Calu3 (cell line): ENCODE measurements at regions of chr5 and their contacts with region 1.

Region 1: DNA sequence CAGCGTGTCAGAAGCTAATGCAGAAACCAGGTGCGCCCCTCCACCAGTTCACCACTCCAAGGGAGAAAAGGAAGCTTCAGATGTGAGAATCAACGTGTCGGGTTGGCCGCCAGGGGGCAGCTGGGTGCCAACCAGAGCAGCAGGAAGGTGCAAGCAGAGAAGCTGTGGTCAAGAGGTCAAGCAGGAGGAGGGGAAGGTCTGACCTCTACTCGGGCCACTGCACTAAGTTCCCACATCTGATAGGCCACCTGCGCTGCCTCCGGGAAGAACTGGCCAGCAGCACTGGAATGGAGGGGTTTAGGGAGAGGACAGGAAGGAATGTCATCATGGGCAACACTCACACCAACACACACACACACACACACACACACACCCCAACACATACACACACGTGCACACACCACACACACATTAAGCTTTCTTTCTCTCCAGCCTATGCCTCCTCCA is 31.4 kb downstream of the ANXA6 start:
- DNase-seq: peak; percentile 86
- H3K4me3 Mint-ChIP-seq: no peak overlapping the region
- H3K27ac Mint-ChIP-seq: no peak overlapping the region
- H3K4me1 Mint-ChIP-seq: peaks cover 11% of the 10 kb centered on the region
- H3K27me3 Mint-ChIP-seq: no peaks in the 10 kb centered on the region
- CTCF ChIP-seq: peak; percentile 91

Region 2: DNA sequence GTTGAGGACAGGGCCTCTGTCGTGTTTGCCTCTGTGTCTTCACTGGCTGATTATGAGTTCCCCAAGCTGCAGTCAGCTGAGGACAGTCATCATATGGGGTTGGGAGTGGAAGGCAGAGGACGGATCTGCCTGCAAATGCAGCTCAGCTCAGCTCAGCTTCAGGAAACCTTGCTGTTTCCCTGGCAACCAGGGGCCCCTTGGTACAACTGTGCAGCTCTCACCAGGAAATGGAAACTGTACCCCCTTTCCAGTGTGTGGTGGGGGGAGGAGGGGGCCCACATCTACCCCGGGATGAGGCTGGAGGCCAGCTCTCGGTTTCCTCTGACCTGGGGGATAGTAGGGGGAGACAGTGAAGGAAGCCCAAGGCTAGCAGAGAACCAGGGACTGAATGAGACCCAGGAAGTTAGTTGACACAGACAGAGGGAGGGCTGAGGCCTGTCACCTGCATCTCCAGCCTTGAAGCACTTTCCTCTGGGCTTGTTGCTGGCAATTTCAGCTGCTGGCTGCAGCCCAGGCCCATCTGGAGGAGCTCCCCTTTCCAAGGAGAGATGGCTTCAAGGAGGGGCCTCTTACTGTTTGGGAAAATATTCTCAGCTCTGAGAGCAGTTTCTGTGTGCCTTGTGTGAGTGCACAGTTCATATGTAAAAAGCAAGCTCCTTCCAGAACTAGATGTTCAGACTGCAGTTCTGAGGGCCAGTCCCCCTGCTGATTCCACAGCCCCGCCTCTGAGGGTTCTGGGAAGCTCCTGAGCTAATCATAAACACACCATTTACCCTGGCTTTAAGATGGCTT is 24.4 kb after region 1 on chr5:
- CTCF ChIA-PET with region 1: interaction called, 10 read pairs
- intact Hi-C with region 1: no loop called
- DNase-seq: no peak
- H3K4me3 Mint-ChIP-seq: no peak overlapping the region
- H3K27ac Mint-ChIP-seq: no peak overlapping the region
- H3K4me1 Mint-ChIP-seq: no peaks in the 10 kb centered on the region
- H3K27me3 Mint-ChIP-seq: no peaks in the 10 kb centered on the region
- CTCF ChIP-seq: no peak